Right ventricle myocardium superior (tissue), 1 donor: ENCODE measurements at regions of chr17 and their contacts with region 1.

Region 1: DNA sequence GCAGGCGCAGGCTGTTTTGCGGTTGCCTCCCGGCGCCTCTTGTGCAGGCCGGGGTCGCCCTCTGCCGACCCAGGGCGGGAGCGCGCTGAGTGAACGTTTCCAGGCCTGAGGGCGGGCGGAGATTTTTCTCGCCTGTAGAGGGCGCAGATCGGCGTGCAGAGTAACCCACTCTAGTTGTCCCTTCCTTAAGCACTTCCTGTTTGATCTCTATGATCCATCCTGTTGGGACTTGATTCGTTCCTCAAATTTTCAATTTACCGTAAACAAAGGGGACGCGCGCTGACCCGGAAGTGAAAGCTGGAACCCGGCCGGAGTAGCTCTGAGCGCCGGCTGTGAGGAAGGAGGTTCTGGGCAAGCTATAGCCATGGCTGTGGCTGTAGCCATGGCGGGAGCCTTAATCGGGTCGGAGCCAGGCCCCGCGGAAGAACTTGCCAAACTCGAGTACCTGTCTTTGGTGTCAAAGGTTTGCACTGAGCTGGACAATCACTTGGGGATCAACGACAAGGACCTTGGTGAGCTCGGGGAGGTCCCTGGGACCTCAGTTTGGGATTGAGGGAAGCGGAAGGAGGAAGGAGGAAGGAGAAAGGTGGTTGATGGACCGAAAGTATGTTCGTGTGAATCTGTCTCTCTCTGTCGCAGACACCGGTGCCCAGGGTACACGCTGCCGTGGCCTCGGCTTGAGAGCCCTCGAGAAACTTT is at the start of gene DHX8:
- DNase-seq: peak; percentile 98
- ATAC-seq: peak; percentile 99
- total RNA-seq, gene DHX8: 26.1 TPM

Region 2: DNA sequence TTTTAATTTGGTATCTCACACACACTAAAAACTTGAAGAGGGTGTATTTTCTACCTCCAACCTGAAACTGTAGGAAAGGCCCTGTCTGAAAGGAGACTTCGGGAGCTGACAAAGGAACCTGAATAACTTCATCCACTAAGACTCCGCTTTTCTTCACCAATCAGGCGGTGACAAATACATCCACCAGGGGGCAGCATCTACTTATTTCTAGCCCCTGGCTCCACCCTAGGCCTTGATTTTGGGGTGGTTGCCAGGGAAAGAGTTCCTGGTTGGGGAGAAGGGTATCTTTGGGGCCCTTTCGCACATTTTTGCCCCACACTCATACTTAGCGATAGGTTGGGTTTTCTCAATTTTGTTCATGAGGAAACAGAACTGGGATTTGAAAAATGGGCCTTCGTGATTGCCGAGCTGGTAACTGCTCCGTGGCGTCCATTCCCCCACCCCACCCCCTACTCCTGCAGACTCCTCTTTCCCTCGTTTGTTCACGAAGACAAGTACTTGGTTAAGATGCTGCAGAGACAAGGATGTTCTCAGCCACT is 89.8 kb before region 1 on chr17:
- intact Hi-C with region 1: loop called (anchors 1 kb)
- DNase-seq: peak; percentile 86
- ATAC-seq: peak; percentile 65